ENCODE measurements at regions of chr7 and their contacts with region 1.

Region 1: DNA sequence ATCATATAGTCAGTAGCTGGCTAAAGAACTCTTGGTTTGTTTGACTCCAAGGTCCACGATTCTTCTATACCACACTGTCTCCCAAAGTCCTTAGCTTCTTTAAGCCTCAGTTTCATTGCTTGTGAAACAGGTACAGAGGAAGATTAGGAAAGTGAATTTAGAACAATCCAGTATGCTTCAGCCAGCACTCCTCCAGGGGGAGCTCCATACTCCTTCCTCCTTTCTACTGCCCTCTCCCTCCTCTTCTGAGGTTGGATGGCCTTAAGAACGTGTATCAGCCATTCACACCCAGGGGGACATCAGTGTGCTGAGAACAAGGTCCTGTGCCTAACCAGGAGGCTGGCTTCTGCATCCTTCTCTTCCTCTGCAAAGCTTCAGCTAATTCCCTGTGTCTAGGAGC is 54.8 kb upstream of the CALD1 start:
- DNase-seq: no peak
- H3K4me3 ChIP-seq: no peak overlapping the region
- H3K27me3 ChIP-seq: no peaks in the 10 kb centered on the region
- CTCF ChIP-seq: peak; percentile 67

Region 2: DNA sequence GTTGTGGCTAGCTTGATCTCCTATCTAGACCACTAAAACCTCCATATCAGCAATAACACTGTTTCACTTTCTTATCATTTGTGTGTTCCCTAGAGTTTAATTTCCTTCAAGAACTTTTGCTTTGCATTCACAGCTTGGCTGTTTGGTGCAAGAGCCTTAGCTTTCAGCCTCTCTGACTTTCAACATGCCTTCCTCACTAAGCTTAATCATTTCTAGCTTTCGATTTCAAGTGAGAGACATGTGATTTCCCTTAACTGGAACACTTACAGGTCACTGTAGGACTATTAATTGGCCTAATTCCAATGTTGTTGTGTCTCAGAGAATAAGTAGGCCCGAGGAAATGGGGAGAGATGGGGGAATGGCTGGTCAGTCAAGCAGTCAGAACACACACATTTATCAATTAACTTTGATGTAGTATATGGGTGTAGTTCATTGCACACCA is 88.6 kb before region 1 on chr7:
- CTCF ChIA-PET with region 1: no interaction called
- POLR2A ChIA-PET with region 1: no interaction called
- DNase-seq: no peak
- H3K4me3 ChIP-seq: no peak overlapping the region
- H3K27me3 ChIP-seq: no peaks in the 10 kb centered on the region
- CTCF ChIP-seq: no peak

Region 3: DNA sequence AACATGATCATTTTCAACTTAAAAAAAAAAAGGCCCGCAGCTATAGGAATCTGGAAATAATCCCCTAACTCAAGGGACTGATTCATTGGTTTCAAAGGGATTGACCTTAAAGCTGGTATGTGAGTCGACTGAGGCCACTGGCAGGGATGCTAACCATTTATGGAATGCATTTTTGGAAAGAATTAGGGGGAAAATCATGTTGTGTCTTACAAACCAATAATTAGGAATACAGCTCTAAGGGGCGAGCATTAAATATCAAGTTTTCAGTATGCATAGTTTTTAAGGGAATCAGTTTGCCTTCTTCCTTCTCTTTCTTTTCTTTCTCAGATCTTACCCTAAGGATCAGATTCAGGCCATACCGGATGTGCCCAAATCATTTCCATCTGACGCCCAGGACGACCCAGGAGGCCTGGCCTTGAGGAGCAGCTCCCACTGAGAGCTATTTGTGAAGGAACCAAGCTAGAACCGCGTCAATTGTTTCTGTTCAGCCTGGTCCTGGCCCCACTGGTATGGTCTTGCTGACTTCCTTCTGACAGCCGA is 29.2 kb before region 1 on chr7:
- CTCF ChIA-PET with region 1: interaction called, 17 read pairs
- POLR2A ChIA-PET with region 1: interaction called, 24 read pairs
- DNase-seq: peak; percentile 74
- H3K4me3 ChIP-seq: no peak overlapping the region
- H3K27me3 ChIP-seq: no peaks in the 10 kb centered on the region
- CTCF ChIP-seq: no peak

Region 4: GRCh38 chr7:134701272-134701671 is 23.3 kb before region 1 on chr7:
- CTCF ChIA-PET with region 1: interaction called, 11 read pairs
- POLR2A ChIA-PET with region 1: no interaction called
- DNase-seq: no peak
- H3K4me3 ChIP-seq: no peak overlapping the region
- H3K27me3 ChIP-seq: no peaks in the 10 kb centered on the region
- CTCF ChIP-seq: peak; percentile 14; the same call in 1 of the 2 replicates

Region 5: DNA sequence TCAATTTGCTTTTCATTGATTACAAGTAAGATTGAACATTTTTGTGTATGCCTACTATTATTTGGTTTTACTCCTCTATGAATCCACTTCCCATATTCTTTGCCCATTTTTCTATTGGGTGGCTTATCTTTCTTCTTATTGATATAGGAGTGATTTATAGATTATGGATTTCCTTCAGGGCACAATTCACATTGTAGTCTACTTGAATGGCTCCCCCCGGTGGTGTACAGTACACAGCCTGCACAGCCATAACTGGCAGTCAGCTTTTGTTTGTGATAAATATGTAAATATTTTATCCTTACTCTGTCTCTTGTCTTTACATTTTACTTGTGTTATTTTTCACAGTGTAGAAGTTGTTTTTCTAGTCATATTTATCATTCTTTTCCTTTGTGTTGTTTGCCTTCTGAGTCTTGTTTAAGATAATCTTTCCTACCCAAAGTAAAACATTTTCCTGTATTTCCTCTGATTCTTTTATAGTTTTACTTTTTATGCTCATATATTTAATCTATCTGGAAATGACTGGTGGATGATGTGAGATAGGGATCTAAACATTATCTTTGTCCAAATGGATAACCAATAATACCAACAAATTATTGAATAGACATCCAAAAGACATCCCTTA is 30.9 kb after region 1 on chr7:
- CTCF ChIA-PET with region 1: interaction called, 32 read pairs
- POLR2A ChIA-PET with region 1: no interaction called
- DNase-seq: no peak
- H3K4me3 ChIP-seq: no peak overlapping the region
- H3K27me3 ChIP-seq: no peaks in the 10 kb centered on the region
- CTCF ChIP-seq: peak; percentile 79

Region 6: DNA sequence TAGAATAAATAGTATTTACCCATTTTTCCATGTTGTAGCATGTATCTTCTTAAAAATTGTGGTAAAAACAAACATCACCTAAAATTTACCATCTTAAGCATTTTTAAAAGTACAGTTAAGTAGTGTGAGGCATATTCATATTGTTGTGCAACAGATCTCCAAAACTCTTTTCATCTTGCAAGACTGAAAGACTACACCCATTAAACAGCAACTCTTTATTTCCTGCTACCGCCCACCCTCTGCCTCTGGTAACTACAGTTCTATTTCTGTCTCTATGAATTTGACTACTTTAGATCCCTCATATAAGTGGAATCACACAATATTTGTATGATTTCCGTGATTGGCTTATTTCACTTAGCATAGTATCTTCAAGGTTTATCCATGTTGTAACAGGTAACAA is 221.7 kb after region 1 on chr7:
- CTCF ChIA-PET with region 1: no interaction called
- POLR2A ChIA-PET with region 1: no interaction called
- DNase-seq: no peak
- H3K4me3 ChIP-seq: no peak overlapping the region
- H3K27me3 ChIP-seq: no peaks in the 10 kb centered on the region
- CTCF ChIP-seq: no peak

Measured in BJ (cell line).